Activated CD8-positive, alpha-beta memory T cell treated with anti-CD3 and anti-CD28 coated beads, Interleukin-2, amount 10 ng/mL, durations not matched to agents 7 days and 5 days (primary cell): ENCODE measurements at regions of chr10 and their contacts with region 1.

Region 1: DNA sequence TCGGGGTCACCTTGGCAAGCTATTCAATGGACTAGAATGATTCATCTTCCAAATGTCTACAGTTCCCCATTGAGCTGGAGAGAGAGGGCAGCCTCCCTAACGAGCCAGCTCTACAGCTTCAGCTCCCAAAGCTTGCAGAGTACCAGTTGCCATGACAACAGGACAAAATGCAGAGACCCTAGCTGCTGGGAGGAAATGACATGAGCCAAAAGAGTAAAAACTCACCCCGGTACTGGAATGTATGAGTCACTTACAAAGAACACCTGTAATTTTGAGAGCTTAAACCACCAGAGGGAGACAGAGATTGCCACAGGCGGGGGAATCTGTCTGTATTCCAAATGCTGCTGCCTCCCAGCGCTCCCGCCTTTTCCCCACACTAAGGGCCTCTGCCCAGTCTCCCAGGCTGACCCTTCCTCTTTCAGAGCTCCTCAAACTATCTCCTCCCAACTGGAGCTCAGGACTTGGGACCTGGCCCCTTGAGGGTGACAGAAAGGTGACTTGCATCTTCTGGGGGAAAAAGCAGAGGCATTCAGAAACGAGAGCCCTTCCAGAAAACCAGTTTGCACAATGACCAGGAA is 95.5 kb downstream of the CUL2 start:
- DNase-seq: peak; percentile 78
- ATAC-seq: peak; percentile 94
- H3K4me3 Mint-ChIP-seq: no peak overlapping the region
- H3K27ac Mint-ChIP-seq: peak overlapping the region; percentile 28
- H3K4me1 Mint-ChIP-seq: peaks cover 16% of the 10 kb centered on the region
- H3K27me3 Mint-ChIP-seq: no peaks in the 10 kb centered on the region

Region 2: DNA sequence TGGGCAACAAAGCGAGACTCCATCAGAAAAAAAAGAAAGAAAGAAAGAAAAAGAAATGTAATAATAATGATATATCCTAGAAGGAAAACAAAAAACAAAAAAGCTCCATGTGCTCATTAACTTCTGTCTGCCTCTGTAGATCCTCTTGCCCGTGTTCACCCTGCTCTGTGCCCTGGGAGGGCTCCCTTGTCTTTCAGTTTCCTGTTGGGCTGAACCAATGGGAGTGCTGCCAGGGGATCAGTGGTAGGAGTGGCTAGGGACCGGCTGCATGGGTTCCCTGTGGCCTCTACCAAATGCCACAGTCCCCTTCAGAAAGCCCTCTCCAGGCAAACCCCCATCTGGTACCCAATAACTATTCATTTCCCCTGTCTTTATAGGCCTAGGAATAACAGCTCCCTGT is 127.8 kb before region 1 on chr10:
- CTCF ChIA-PET with region 1: no interaction called
- DNase-seq: no peak
- ATAC-seq: no peak
- H3K4me3 Mint-ChIP-seq: no peak overlapping the region
- H3K27ac Mint-ChIP-seq: no peak overlapping the region
- H3K4me1 Mint-ChIP-seq: no peaks in the 10 kb centered on the region
- H3K27me3 Mint-ChIP-seq: no peaks in the 10 kb centered on the region

Region 3: GRCh38 chr10:35027567-35027966 is 32.9 kb after region 1 on chr10:
- CTCF ChIA-PET with region 1: interaction called, 24 read pairs
- DNase-seq: no peak
- ATAC-seq: no peak
- H3K4me3 Mint-ChIP-seq: no peak overlapping the region
- H3K27ac Mint-ChIP-seq: no peak overlapping the region
- H3K4me1 Mint-ChIP-seq: no peaks in the 10 kb centered on the region
- H3K27me3 Mint-ChIP-seq: no peaks in the 10 kb centered on the region

Region 4: DNA sequence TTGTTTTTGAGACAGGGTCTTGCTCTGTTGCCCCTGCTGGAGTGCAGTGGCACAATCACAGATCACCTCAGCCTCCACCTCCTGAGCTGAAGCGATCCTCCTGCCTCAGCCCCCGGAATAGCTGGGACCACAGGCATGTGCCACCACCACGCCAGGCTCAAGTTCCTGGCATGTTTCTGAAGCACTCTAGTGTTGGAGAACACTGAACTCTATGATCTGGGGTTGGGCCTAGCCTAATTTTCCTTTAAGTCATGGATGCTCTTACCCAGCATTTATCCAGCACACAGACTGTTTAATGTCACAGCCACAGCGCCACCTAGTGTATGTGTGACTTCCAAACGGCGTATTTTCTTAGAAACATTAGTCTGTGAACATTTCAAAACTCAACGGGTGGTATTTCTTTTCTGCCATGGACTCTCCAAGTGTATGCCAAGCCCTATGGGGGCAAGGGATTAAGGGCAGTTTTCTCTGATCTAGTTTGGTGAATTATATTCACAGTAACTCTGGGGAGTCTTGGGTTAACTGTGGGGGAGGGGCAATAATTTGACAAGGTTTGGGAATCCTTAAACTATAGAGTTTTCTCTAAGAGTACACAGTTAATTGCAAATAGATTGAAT is 223.8 kb after region 1 on chr10:
- CTCF ChIA-PET with region 1: interaction called, 15 read pairs
- DNase-seq: peak; percentile 92
- ATAC-seq: peak; percentile 84
- H3K4me3 Mint-ChIP-seq: peak overlapping the region; percentile 46
- H3K27ac Mint-ChIP-seq: peak overlapping the region; percentile 81
- H3K4me1 Mint-ChIP-seq: peaks cover 51% of the 10 kb centered on the region
- H3K27me3 Mint-ChIP-seq: no peaks in the 10 kb centered on the region

Region 5: DNA sequence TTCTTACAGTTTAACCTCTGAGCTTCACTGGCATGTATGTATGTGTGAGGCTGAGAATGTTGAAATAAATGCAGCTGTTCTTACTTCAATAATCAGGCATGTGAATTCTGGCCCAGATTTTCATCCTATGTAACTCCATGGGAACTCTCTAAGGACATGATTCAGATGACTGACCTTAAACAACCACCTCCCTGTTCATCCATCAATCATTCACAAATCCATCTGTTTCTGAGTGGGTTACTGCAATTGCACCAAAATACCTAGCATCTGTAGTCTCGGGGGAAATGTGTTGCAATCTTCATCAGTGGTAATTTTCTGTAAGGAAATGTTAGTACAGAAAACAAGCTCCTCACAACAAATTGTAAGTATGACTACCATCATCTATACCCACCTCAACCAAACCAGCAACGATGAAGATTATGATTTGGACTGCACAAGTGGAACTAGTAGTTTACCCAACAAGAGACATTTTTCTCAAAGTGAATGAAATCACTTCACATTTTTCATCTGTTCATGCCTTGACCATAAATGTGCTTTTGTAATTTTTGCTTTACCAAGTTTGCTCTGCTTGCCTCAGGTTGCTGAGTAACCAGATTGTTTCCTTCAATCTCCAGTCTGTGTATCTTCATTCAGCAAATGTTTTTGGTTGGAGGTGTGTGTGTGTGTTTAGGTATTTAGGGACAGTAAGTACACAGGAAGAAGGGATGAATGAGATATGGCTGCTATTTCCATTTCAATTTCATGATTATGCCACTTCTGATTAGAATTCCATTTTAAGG is 713.2 kb after region 1 on chr10:
- CTCF ChIA-PET with region 1: no interaction called
- DNase-seq: no peak
- ATAC-seq: no peak
- H3K4me3 Mint-ChIP-seq: no peak overlapping the region
- H3K27ac Mint-ChIP-seq: no peak overlapping the region
- H3K4me1 Mint-ChIP-seq: no peaks in the 10 kb centered on the region
- H3K27me3 Mint-ChIP-seq: no peaks in the 10 kb centered on the region